Astrocyte of the cerebellum (primary cell): ENCODE measurements at regions of chr1 and their contacts with region 1.

Region 1: GRCh38 chr1:35539073-35539823 is 18.0 kb downstream of the KIAA0319L start:
- DNase-seq: no peak
- H3K4me3 ChIP-seq: no peak overlapping the region
- CTCF ChIP-seq: no peak

Region 2: GRCh38 chr1:35451125-35451528 is 88.1 kb before region 1 on chr1:
- in situ Hi-C with region 1: loop called (anchors 10 kb)
- DNase-seq: peak; percentile 63
- H3K4me3 ChIP-seq: no peak overlapping the region
- CTCF ChIP-seq: peak; percentile 93

Region 3: GRCh38 chr1:35641233-35641866 is 102.1 kb after region 1 on chr1 and contains the start of gene PSMB2:
- in situ Hi-C with region 1: no loop called
- DNase-seq: peak; percentile 92
- H3K4me3 ChIP-seq: peak within 1 kb of the TSS; percentile 98
- CTCF ChIP-seq: no peak